ENCODE measurements at regions of chr9 and their contacts with region 1.

Region 1: DNA sequence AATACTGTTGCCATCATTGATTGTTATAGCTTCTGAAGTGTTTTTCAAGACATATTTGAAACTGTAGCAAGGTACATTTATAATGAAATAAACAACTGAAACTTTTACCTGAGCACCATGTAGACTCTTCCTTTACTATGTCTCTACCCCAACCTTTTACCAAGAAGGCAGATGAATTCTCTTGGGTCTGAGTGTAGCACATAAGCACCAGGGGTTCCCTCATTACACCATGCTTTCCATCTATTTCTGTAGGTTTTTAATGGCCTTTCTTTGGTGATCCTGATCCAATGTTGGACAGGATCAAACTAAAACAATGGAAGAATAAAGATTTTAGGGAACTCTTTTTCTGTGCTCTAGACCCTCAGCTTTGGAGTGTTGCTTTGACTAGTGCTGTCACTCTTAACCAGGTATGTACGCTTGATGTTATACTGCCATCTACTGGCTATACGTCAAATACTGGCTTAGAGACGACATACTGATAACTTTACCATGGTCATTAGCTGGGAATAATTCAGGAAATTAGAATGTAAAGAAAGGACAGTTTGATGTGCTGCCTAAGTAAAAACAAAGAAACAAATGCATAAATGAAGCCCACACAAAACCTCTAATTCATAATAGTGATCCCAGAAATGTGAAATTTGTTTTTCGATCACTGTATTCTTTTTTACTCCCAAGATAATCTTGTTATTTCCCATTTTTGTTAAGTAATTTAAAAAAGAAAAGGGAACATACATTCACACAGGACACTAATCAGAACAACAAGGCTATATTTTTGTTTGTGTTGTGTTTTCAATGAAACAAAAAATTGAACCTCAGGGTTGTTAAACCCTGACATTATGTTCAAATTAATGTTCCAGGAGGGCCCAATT is 30.7 kb downstream of the IFNW1 start:
- DNase-seq: no peak
- H3K4me3 ChIP-seq: no peak overlapping the region
- H3K27ac ChIP-seq: no peak overlapping the region
- H3K4me1 ChIP-seq: peaks cover 0 to 5% (median 0%) of the 10 kb centered on the region in 4 donors
- H3K27me3 ChIP-seq: no peaks in the 10 kb centered on the region
- CTCF ChIP-seq: peak; percentile 78 to 82

Region 2: DNA sequence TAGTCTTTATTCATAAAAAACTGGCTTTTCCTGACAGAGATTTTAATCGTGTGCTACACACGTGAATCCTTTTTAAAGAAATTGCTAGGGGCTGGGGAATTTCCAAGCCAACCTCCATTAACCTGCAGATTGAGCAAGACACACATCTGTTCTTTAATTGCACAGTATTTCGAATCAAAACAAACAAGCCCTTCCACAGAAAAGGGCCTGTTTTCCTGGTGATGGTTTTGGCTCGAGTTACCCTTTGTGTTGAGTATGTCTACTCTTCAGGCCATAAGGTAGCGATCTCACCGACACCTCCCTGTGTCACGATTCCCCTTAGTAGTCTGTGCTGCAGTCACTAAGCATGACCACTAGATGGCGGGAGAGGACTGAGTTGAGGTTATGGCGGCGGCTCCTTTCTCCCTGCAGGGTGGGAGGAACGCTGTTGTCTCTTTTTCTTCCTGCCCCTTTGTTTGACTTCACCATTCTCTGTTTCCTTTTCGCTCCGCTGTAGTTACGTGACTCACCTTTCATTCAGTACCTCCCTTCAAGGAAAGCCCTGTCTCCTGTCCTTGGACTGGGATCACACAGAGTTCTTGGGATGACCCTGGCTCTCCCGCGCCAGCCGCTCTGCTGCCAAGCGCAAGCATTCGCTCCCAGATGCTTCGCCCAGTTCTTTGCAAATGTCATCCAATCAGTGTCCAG is 1185.0 kb before region 1 on chr9:
- intact Hi-C with region 1: loop called (anchors 10 kb)
- DNase-seq: peak; percentile 63 to 75
- H3K4me3 ChIP-seq: peak overlapping the region; percentile 33 to 47
- H3K27ac ChIP-seq: no peak overlapping the region
- H3K4me1 ChIP-seq: peaks cover 0 to 3% (median 0%) of the 10 kb centered on the region in 4 donors
- H3K27me3 ChIP-seq: peaks cover 0 to 5% of the 10 kb centered on the region in 2 donors
- CTCF ChIP-seq: peak; percentile 90 to 95

Region 3: GRCh38 chr9:20884985-20885593 is 225.9 kb before region 1 on chr9:
- intact Hi-C with region 1: loop called (anchors 10 kb)
- DNase-seq: peak; percentile 57 to 72
- H3K4me3 ChIP-seq: no peak overlapping the region
- H3K27ac ChIP-seq: no peak overlapping the region
- H3K4me1 ChIP-seq: no peaks in the 10 kb centered on the region
- H3K27me3 ChIP-seq: no peaks in the 10 kb centered on the region
- CTCF ChIP-seq: peak; percentile 59 to 62

Region 4: DNA sequence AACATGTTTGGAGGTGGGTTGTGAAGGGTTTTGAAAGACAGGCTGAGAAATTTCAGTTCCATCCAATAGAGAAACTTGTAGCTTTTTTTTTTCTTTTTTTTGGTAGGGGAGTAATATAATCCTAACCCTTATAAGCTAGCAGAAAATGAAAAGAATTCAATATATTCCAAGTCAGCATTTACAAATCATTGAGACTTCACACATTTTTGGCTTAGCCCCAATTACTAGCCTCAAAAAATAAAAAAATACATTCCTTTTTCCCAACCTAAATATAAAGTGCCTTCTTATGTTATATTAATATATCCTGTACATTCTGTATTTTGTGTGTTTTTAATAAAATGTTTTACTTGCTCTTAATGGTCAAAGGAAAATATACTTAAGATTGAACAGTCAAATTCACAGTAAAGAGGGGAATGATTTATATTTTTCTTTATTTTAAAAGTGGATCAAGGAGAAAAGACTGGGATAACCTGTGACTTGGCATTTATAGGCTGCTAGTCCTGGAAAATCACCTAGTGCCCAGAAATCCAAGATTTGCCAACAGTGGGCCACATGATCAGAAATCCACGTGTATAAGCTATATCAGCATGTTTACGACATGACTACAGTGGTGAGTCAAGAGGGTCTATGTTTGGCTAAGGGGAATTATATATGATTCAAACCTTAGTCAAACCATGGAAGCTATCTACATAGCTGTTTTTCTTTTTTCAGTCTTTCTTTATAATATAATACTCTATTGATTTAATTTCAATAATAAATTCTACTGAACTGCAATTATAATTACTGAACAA is 94.0 kb before region 1 on chr9:
- intact Hi-C with region 1: no loop called
- DNase-seq: no peak
- H3K4me3 ChIP-seq: no peak overlapping the region
- H3K27ac ChIP-seq: no peak overlapping the region
- H3K4me1 ChIP-seq: peaks cover 0 to 21% (median 9%) of the 10 kb centered on the region in 4 donors
- H3K27me3 ChIP-seq: no peaks in the 10 kb centered on the region
- CTCF ChIP-seq: no peak